ENCODE measurements at regions of chr12 and their contacts with region 1.

Region 1: GRCh38 chr12:131949431-131950181 is at the start of gene EP400:
- DNase-seq: peak; percentile 52
- H3K4me3 ChIP-seq: peak within 1 kb of the TSS; percentile 84
- H3K27me3 ChIP-seq: no peaks in the 10 kb centered on the region
- CTCF ChIP-seq: 0 out of 2 replicates have a peak, but pooled peaks have one; percentile 14
- polyA plus RNA-seq, gene EP400: 2.5 and 3.2 TPM in 2 replicates

Region 2: DNA sequence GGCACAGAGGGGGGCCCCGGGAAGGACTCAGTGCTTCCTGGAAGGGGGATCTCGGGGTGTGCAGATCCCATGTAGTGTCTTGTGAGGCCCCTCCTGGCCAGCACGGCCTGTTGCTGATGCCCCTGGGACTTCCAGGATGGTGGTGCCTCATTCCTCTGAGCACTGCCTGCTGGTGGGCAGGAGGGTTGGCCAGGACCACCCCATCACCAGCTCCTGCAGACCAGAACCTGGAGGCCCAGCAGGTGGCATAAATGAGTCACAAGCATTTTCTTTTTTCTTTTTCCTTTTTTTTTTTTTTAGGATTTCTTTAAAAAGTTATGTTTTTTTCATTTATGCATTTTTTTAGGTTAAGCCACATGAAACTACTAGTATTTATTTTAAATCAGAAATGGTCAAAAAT is 113.4 kb before region 1 on chr12:
- CTCF ChIA-PET with region 1: interaction called, 11 read pairs
- POLR2A ChIA-PET with region 1: no interaction called
- DNase-seq: no peak
- H3K4me3 ChIP-seq: no peak overlapping the region
- H3K27me3 ChIP-seq: no peaks in the 10 kb centered on the region
- CTCF ChIP-seq: peak; percentile 46

Measured in BJ (cell line).